Prostate gland (tissue), 2 donors: ENCODE measurements at regions of chr11 and their contacts with region 1.

Region 1: DNA sequence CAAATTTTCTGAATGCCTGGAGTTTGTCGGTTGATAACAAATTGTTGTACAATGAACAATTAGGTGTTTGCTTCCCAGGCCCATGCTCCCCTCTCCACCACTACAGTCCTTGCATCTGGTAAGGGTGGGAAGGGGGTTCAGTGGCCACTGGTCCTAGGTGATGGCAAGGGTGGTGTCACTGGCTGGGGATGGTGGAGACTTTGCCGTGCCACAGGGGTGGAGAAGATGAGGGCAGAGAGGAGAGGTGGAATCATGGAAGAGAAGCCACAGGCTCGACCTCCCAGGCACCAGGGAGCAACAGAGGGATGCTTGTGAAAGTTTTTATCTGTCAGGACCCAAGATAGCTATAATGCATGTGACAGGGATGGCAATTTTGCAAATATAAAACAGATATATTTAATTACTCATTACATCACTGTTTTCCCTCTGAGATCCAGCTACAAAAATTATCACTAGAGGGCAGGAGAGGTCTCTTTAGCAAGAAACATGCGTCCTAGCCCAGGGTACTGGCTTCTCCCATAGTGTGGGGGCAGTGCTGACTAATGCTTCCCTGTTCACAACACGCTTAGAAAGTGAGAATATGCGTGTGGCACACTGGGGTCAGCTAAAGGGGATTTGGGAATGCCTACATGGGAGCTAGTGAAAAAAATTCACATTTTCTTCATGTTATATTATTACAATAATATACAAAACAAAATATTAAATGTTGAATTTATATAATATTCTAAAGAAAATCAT is 49.0 kb upstream of the AMPD3 start:
- DNase-seq: peak; percentile 65
- H3K4me3 ChIP-seq: no peak overlapping the region
- H3K27ac ChIP-seq: no peak overlapping the region
- H3K4me1 ChIP-seq: no peaks in the 10 kb centered on the region
- H3K27me3 ChIP-seq: no peaks in the 10 kb centered on the region
- CTCF ChIP-seq: peak in 3 of 4 experiments; percentile 61 to 79 (median 77)
- POLR2A ChIP-seq: no peak

Region 2: GRCh38 chr11:10450464-10451425 is 44.7 kb after region 1 on chr11:
- intact Hi-C with region 1: loop called (anchors 5 kb)
- DNase-seq: peak; percentile 51
- H3K4me3 ChIP-seq: peak overlapping the region; percentile 46 to 55
- H3K27ac ChIP-seq: peak overlapping the region; percentile 90 to 92
- H3K4me1 ChIP-seq: peaks cover 13% of the 10 kb centered on the region
- H3K27me3 ChIP-seq: no peaks in the 10 kb centered on the region
- CTCF ChIP-seq: peak; percentile 40 to 71 (median 60)
- POLR2A ChIP-seq: peak; percentile 22

Region 3: GRCh38 chr11:10522921-10523320 is 116.9 kb after region 1 on chr11:
- intact Hi-C with region 1: no loop called
- DNase-seq: peak; percentile 91
- H3K4me3 ChIP-seq: no peak overlapping the region
- H3K27ac ChIP-seq: peak overlapping the region; percentile 66
- H3K4me1 ChIP-seq: peaks cover 12% of the 10 kb centered on the region
- H3K27me3 ChIP-seq: no peaks in the 10 kb centered on the region
- CTCF ChIP-seq: no peak
- POLR2A ChIP-seq: no peak

Region 4: DNA sequence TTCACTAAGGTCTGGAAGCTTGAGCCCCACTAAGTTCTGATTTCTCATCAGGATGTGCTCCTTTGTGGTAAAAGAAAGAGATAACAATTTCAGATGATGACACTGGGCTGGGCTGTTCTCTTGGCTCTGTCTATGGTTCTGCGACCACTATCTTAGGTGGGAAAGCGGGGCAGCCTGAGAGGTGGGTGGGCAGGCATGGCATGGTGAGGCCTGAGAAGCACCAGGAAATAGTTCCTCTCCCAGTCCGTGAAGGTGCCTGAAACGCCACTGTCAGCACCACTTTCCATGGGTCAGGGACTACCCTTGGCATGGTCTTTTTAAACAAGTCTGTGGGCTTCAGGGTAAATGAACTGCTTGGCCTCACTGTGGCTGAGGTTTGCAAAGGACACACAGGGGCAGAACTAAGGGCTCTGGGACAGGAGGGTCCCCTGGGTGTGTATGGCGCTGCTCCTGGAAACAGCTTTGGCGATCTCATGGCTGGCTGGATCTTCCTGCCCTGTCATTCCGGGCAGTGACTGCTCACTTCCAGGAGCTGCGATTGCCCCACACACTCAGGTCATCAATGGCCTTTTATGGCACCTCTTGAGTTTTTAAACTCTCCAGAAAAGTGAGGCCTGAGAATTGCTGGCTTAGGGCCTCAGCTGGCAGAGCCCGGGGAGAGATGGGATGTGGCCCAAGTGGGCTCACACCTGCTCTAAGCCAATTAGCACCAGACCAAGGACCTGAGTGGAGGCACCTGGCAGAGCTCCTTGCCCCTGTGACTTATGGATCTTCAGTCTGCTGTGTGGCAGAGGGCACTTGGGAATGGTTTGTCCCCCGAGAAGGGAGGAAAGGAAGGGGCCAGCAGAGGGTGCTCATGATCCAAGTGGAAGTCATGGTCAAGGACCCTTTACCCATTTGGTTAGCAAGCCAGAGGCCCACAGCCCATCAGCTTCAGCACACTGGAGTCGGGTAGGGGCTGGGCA is 218.1 kb after region 1 on chr11:
- intact Hi-C with region 1: loop called (anchors 10 kb)
- DNase-seq: no peak
- H3K4me3 ChIP-seq: no peak overlapping the region
- H3K27ac ChIP-seq: peak overlapping the region; percentile 16 to 31
- H3K4me1 ChIP-seq: no peaks in the 10 kb centered on the region
- H3K27me3 ChIP-seq: no peaks in the 10 kb centered on the region
- CTCF ChIP-seq: peak in 3 of 4 experiments; percentile 36 to 53 (median 46)
- POLR2A ChIP-seq: no peak